MCF 10A (cell line): ENCODE measurements at regions of chr9 and their contacts with region 1.

Region 1: DNA sequence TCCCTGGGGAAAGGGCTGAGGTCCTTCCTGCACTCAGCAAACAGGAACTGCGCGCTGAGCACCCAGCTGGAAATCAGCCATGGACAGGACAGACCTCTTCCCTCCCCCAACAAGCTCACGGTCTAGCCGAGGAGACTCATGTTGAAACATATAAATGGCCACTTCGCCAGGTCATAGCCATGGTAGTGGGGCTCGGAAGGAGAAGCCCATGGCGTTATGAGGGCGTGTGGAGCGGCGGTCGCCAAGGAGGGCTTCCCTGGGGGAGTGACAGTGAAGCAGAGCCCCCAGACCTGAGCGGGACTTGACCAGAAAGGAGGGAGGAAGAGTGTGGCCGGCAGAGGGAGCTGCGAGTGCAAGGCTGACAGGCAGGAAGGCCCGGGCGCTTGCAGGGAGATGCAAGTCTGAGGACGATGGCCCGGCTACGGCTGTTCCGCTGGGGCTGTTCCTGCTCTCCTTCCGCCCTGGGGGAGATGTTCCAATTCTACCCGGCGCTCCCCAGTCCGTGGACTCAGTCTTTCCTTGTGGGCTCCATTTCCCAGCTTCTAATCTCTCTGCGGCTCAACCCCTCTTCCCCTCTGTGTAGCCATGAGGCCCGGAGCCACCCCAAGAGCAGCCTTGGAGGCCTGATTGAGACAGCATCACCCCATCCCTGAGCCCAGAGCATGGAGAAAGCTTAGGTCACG is 43.9 kb upstream of the PRRC2B start:
- DNase-seq: peak; percentile 79
- H3K4me3 Mint-ChIP-seq: no peak overlapping the region
- H3K27ac Mint-ChIP-seq: peak overlapping the region; percentile 84
- H3K4me1 Mint-ChIP-seq: no peaks in the 10 kb centered on the region
- H3K27me3 Mint-ChIP-seq: no peaks in the 10 kb centered on the region
- CTCF ChIP-seq: peak; percentile 77

Region 2: DNA sequence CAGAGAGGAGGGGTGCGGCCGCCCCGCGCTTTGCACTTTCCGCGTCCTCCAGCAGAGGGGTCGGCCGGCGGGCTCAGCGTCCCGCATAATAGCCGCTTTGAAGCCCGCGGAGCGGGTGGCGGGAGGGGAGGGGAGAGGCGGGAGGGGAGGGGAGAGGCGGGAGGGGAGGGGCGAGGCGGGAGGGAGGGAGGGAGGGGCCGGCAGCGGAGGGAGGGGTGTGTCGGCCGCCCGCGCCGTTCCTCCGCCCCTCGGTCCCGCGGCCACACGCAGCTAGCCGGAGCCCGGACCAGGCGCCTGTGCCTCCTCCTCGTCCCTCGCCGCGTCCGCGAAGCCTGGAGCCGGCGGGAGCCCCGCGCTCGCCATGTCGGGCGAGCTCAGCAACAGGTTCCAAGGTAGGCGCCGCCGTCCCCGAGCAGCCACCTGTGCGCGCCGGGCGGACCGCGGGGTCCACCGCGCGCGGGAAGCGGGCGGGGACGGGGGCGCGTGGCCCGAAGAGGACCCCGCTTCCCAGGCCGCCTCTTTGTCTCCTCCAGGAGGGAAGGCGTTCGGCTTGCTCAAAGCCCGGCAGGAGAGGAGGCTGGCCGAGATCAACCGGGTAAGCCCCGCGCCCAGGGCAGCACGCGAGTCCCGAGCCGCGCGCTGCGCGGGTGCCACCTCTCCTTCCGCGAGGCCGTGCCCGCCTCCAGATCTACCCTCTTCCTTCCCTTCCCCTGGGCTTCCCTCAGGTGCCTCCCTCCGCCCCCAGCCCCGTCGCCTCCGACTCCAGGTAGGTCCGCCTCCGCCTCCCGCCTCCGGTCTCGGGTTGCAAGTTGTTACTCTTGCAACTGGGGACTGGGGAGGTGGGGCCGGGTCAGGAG is 253.5 kb before region 1 on chr9 and contains the start of gene AIF1L:
- CTCF ChIA-PET with region 1: no interaction called
- POLR2A ChIA-PET with region 1: no interaction called
- intact Hi-C with region 1: no loop called
- DNase-seq: peak; percentile 47
- H3K4me3 Mint-ChIP-seq: peak within 1 kb of the TSS; percentile 70
- H3K27ac Mint-ChIP-seq: no peak within 1 kb of the TSS
- H3K4me1 Mint-ChIP-seq: peaks cover 10% of the 10 kb centered on the region
- H3K27me3 Mint-ChIP-seq: no peaks in the 10 kb centered on the region
- CTCF ChIP-seq: no peak
- total RNA-seq, gene AIF1L: 2.6 and 4.1 TPM in 2 replicates

Region 3: GRCh38 chr9:131187957-131188356 is 162.1 kb before region 1 on chr9:
- CTCF ChIA-PET with region 1: no interaction called
- POLR2A ChIA-PET with region 1: no interaction called
- intact Hi-C with region 1: no loop called
- DNase-seq: no peak
- H3K4me3 Mint-ChIP-seq: no peak overlapping the region
- H3K27ac Mint-ChIP-seq: peak overlapping the region; percentile 41
- H3K4me1 Mint-ChIP-seq: peaks cover 17% of the 10 kb centered on the region
- H3K27me3 Mint-ChIP-seq: no peaks in the 10 kb centered on the region
- CTCF ChIP-seq: no peak

Region 4: DNA sequence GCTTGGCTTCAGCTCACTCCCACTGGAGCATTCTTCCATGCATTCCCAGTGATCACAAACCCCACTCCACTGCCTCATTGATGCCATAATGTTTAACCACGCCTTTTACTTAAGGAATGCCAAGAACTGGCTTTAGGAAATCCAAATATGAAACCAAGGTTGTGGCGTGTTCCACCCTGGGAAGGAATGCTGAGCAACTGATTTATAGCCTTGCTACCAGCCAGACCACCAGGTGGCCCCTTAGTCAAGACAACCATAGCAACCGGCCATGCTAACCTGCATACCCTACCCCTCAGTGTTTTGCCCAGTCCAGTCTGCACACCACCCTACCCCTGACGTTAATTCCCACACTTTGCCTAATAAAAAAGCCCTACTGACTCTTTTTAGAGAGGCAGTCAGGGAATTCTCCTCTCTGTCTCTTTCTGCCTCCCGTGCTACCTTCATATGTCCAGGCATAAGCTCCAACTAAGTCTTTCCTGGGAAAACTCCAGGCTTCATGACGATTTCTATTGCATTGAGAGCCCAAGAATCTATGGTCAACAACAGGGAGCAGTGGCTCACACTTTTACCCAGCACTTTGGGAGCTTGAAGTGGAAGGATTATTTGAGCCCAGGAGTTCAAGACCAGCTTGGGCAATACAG is 16.9 kb after region 1 on chr9:
- CTCF ChIA-PET with region 1: interaction called, 21 read pairs
- POLR2A ChIA-PET with region 1: interaction called, 4 read pairs
- intact Hi-C with region 1: no loop called
- DNase-seq: peak; percentile 70
- H3K4me3 Mint-ChIP-seq: no peak overlapping the region
- H3K27ac Mint-ChIP-seq: peak overlapping the region; percentile 43
- H3K4me1 Mint-ChIP-seq: peaks cover 7% of the 10 kb centered on the region
- H3K27me3 Mint-ChIP-seq: no peaks in the 10 kb centered on the region
- CTCF ChIP-seq: no peak

Region 5: DNA sequence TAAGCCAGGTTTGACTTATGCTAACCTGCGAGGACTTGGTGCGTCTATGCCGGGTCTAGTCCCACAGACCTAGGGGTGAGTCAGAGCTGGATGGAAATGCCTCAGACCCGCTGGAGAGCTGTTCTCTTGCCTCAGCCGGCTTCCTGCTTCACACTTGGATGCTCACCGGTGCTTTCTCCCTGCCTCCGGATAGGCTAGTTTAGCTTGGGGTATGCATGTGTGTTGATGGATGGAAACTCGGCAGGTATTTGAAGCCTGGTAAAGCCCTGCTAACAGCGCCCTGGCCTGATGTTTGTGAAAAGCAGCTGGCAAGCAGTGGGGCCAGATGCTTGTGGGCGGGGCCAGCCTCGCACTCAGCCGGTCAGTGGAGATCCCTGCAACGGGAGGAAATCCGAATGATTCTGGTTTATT is 73.2 kb after region 1 on chr9:
- CTCF ChIA-PET with region 1: interaction called, 11 read pairs
- POLR2A ChIA-PET with region 1: no interaction called
- intact Hi-C with region 1: no loop called
- DNase-seq: peak; percentile 94
- H3K4me3 Mint-ChIP-seq: peak overlapping the region; percentile 51
- H3K27ac Mint-ChIP-seq: peak overlapping the region; percentile 64
- H3K4me1 Mint-ChIP-seq: peaks cover 50% of the 10 kb centered on the region
- H3K27me3 Mint-ChIP-seq: no peaks in the 10 kb centered on the region
- CTCF ChIP-seq: no peak

Region 6: DNA sequence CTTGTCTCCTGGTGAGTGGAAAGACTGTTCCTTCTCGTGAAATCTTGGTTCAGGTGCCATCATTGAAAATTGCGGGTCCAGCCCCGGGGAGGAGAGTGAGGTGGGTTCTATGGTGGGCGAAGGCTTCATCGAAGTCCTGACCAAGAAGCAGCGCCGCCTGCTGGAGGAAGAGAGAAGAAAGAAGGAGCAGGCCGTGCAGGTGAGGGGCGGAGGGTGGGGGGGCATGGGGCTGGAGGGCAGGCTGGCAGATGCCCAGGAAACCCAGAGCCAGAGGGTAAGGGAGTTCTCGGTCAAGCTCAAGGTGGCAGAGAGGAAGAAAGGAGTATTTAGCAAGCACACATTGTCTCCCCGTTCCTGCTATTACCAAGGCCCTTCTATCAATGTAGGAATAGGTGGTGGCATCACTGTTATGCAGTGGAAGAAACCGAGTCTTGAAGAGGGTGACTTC is 128.4 kb after region 1 on chr9:
- CTCF ChIA-PET with region 1: interaction called, 24 read pairs
- POLR2A ChIA-PET with region 1: no interaction called
- intact Hi-C with region 1: loop called (anchors 1 kb)
- DNase-seq: peak; percentile 55
- H3K4me3 Mint-ChIP-seq: no peak overlapping the region
- H3K27ac Mint-ChIP-seq: no peak overlapping the region
- H3K4me1 Mint-ChIP-seq: no peaks in the 10 kb centered on the region
- H3K27me3 Mint-ChIP-seq: no peaks in the 10 kb centered on the region
- CTCF ChIP-seq: peak; percentile 48